ENCODE measurements at regions of chr3 and their contacts with region 1.

Region 1: DNA sequence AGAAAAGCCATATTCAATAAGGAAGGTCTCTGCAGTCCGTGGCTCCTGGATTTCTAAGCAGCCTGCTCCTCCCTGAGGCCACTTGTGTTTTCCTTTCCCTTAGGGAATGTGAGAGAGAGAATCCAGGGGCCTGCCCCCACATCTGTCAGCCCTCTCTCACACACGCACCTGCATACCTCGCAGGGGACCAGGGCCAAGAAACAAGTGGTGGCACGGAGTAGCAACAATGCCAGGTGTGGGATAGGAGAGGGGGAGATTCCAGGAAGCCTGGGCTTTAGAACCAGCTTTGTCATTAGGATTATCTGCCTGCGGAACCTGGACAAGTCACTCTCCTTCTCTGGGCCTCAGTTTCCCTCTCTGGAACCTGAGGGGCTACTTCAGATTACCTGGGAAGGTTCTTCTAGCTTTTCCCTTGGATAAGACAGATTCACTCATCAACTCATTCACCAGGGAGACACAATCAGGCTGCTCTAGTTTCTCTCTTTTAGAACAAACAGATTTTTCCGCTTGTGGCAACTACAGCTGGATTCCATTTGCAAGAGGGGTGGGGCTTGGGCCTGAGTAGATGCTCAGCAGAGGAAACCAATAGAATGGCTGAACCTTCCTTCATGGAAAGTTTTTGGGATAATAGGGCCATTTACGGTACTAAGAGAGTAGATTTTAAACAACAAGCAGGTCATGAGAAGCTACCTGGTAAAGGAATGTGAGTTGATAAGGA is 19.5 kb downstream of the BCL6 start:
- DNase-seq: no peak
- H3K4me3 ChIP-seq: no peak overlapping the region
- H3K27ac ChIP-seq: no peak overlapping the region
- H3K4me1 ChIP-seq: peaks cover 0 to 4% (median 0%) of the 10 kb centered on the region in 4 experiments
- H3K27me3 ChIP-seq: no peaks in the 10 kb centered on the region

Region 2: GRCh38 chr3:187714404-187714979 is 11.3 kb before region 1 on chr3:
- CTCF ChIA-PET with region 1: interaction called, 10 read pairs
- POLR2A ChIA-PET with region 1: no interaction called
- DNase-seq: peak; percentile 67 to 86 (median 78)
- H3K4me3 ChIP-seq: no peak overlapping the region
- H3K27ac ChIP-seq: no peak overlapping the region
- H3K4me1 ChIP-seq: no peaks in the 10 kb centered on the region
- H3K27me3 ChIP-seq: no peaks in the 10 kb centered on the region

Region 3: DNA sequence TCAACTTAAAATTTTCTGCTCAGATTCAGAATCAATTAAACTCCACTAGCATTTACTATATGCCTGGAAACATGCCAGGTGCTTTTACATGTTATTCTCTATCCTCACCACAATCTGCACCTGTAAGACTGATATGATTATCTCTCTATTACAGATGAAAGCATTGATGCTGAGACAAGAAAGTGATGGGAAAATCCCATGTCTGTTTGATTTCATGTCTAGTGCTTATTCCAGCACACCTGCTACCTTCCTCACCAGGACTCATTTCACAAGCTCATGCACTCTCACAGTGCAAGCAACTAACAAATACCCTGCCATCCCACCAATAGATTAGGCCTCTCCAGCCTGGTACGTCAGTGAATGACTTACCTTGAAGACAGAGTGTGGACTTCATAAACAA is 44.4 kb after region 1 on chr3:
- CTCF ChIA-PET with region 1: no interaction called
- POLR2A ChIA-PET with region 1: no interaction called
- DNase-seq: peak in 2 of 3 donors; percentile 35 to 45
- H3K4me3 ChIP-seq: no peak overlapping the region
- H3K27ac ChIP-seq: no peak overlapping the region
- H3K4me1 ChIP-seq: peaks cover 7 to 25% (median 9%) of the 10 kb centered on the region in 4 experiments
- H3K27me3 ChIP-seq: no peaks in the 10 kb centered on the region